ENCODE measurements at regions of chr16 and their contacts with region 1.

Region 1: GRCh38 chr16:58336332-58337089 is 41.7 kb upstream of the PRSS54 start:
- DNase-seq: peak; percentile 79
- H3K4me3 ChIP-seq: peak overlapping the region in 1 of 3 experiments; percentile 50
- H3K27ac ChIP-seq: no peak overlapping the region
- H3K4me1 ChIP-seq: peaks cover 7% of the 10 kb centered on the region
- H3K27me3 ChIP-seq: peaks cover 0 to 1% of the 10 kb centered on the region in 2 experiments
- CTCF ChIP-seq: peak; percentile 85 to 94
- POLR2A ChIP-seq: no peak

Region 2: GRCh38 chr16:58020628-58021139 is 315.8 kb before region 1 on chr16:
- CTCF ChIA-PET with region 1: no interaction called
- POLR2A ChIA-PET with region 1: no interaction called
- dilution Hi-C with region 1: no loop called
- intact Hi-C with region 1: no loop called
- DNase-seq: peak; percentile 61
- H3K4me3 ChIP-seq: no peak overlapping the region
- H3K27ac ChIP-seq: no peak overlapping the region
- H3K4me1 ChIP-seq: peaks cover 19% of the 10 kb centered on the region
- H3K27me3 ChIP-seq: no peaks in the 10 kb centered on the region
- CTCF ChIP-seq: peak; percentile 73 to 74
- POLR2A ChIP-seq: no peak

Region 3: DNA sequence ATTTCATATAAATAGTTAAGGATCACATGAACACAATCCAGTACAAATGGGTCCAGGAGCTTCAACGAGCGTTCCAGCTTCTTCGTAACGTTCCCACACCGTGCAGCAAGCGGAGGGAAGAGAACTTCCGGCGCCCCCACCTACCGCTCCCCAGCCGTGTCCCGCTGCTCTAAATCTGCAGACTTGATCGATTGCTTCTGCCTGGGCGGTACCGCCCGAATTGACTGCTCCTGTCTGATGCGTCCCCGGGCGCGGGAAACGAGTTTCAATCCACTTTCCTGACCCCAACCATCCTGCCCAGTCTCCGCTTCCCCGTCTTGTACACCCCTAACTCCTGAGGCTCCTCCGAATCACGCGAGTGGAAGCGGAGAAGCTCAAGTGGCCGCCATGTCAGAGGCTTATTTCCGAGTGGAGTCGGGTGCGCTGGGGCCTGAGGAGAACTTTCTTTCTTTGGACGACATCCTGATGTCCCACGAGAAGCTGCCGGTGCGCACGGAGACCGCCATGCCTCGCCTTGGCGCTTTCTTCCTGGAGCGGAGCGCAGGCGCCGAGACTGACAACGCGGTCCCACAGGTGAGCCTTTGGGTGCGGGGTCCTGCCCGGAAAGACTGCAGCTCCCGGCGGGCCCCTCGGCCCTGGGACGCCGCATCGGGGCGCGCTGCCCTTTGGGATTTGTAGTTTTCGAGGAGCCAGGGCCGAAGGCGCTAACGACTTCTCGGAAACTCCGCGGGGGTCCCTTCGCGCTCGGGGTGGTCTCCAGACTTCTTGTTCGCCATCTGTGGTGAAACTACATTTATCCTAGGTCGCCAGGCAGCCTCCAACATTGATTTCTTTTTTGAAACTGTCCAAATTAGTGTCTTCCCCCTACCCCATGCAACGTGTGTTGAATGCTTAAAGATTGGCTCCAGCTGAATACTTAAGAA is 56.0 kb after region 1 on chr16 and contains the start of gene GINS3:
- CTCF ChIA-PET with region 1: interaction called, 6 read pairs
- POLR2A ChIA-PET with region 1: no interaction called
- dilution Hi-C with region 1: no loop called
- intact Hi-C with region 1: loop called (anchors 5 kb)
- DNase-seq: peak; percentile 82
- H3K4me3 ChIP-seq: peak within 1 kb of the TSS; percentile 89 to 96 (median 95)
- H3K27ac ChIP-seq: peak within 1 kb of the TSS; percentile 79
- H3K4me1 ChIP-seq: peaks cover 9% of the 10 kb centered on the region
- H3K27me3 ChIP-seq: no peaks in the 10 kb centered on the region
- CTCF ChIP-seq: no peak
- POLR2A ChIP-seq: no peak
- total RNA-seq, gene GINS3: 24.1 and 29.0 TPM in 2 replicates

Region 4: DNA sequence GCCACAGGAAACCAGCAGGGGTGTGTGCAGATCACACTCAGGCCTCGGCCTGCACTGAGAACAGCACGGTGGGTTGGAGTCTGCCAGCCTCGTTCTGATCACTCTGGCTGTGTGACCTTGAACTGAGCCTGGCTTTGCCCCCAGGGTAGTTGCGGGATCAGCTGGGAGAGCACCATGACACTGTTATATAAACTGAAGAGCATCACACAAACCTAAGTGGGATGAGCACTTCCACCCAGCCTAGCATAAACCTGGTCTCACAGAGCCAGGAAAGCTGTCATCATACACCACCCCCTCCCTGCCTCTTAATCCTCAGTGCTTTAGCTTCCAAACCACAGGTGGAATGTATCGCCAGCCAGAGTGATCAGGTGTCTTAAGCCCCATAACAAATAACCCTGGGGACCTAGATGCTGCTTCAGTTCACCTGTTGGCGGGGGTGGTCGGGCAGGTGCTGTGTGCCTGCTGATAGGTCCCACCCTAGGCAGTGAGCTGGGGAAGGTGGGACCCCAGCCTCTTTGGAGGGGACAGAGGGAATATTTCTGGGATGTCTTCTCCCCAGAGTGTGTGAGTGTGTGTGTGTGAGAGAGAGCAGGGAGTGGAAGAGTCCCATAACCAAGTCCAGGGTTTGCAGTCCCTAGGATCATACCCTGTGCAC is 134.9 kb after region 1 on chr16:
- CTCF ChIA-PET with region 1: interaction called, 30 read pairs
- POLR2A ChIA-PET with region 1: no interaction called
- dilution Hi-C with region 1: no loop called
- intact Hi-C with region 1: no loop called
- DNase-seq: no peak
- H3K4me3 ChIP-seq: no peak overlapping the region
- H3K27ac ChIP-seq: no peak overlapping the region
- H3K4me1 ChIP-seq: peaks cover 12% of the 10 kb centered on the region
- H3K27me3 ChIP-seq: no peaks in the 10 kb centered on the region
- CTCF ChIP-seq: no peak
- POLR2A ChIP-seq: no peak

Region 5: DNA sequence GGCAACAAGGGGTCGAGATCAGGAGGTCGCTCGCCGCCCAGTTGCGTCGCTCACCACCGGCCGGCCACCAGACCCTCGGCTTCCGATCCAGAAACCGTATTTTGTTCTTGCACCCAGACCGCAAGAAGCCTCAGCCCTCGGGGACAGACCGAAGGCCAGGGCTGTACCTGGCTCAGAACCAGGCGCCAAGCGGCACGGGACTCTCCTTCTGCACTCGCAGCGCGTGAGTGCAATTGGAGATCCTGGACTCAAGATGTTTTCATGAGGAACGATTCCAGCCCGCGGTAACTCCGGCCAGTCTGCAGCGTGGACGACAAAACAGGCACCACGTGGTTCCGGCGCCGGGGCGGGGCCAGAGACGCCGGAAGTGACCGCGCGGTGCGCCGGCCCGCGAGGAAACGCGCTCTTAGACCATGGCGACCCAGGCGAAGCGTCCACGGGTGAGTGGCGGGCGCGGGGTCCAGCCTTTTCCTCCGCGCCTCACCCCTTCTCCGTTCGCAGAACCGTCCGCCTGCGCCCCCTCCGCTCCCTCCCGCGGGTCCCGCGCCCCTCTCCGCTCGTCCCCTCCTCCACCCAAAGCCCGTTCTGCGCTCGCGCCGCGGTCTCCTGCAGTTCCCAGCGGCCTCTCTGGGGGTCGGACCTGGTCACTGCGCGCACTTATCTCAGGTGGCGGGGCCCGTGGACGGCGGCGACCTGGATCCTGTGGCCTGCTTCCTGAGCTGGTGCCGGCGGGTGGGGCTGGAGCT is 178.8 kb after region 1 on chr16 and contains the start of gene SETD6:
- CTCF ChIA-PET with region 1: interaction called, 15 read pairs
- POLR2A ChIA-PET with region 1: no interaction called
- dilution Hi-C with region 1: no loop called
- intact Hi-C with region 1: no loop called
- DNase-seq: peak; percentile 90
- H3K4me3 ChIP-seq: peak within 1 kb of the TSS; percentile 32 to 70 (median 63)
- H3K27ac ChIP-seq: peak within 1 kb of the TSS; percentile 50
- H3K4me1 ChIP-seq: peaks cover 12% of the 10 kb centered on the region
- H3K27me3 ChIP-seq: no peaks in the 10 kb centered on the region
- CTCF ChIP-seq: peak in 1 of 2 donors; percentile 23
- POLR2A ChIP-seq: peak; percentile 80
- total RNA-seq, gene SETD6: 10.4 and 16.4 TPM in 2 replicates

Measured in endothelial cell of umbilical vein (primary cell).